ENCODE measurements at regions of chr20 and their contacts with region 1.

Region 1: DNA sequence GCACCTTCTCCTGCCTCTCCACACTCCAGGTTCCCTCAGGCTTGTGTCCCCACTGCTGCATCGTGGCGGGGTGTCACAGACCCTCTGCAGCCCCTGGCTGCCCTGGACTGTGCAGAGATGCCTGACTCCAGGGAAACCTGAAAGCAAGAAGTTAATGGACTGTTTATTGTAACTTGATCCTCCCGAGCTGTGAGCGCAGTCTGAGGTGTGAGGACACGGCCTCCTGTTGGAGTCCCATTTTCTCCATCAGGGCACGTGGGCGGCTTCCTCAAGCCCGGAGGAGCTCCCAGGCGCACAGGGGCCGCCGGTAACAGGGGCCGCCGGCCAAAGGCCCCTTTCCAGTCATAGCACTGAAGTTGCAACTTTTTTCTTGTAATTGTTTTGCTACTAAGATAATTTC is 16.9 kb downstream of the RBM38 start:
- DNase-seq: no peak
- ATAC-seq: no peak

Region 2: GRCh38 chr20:57374931-57375651 is 33.0 kb before region 1 on chr20:
- intact Hi-C with region 1: no loop called
- DNase-seq: no peak
- ATAC-seq: peak; percentile 79

Region 3: DNA sequence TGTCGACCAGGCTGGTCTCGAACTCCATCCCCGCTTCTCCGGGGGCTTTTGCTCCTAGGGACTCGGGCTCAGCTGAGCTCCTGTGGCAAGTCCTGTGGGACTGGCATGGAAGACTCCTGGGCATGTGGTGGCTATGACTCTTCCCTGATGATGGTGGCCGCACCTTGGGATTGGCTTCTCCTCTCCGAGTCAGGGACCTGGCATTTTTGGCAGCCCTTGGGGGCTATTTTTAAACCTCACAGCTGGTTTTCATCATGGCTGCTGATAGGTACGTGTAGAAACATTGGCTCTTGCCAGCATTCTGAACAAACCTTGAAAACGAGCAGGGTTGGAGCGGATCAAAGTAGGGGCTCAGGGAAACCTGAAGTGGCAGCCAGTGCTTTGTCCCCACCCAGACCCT is 37.2 kb after region 1 on chr20:
- intact Hi-C with region 1: loop called (anchors 1 kb)
- DNase-seq: no peak
- ATAC-seq: no peak

Region 4: DNA sequence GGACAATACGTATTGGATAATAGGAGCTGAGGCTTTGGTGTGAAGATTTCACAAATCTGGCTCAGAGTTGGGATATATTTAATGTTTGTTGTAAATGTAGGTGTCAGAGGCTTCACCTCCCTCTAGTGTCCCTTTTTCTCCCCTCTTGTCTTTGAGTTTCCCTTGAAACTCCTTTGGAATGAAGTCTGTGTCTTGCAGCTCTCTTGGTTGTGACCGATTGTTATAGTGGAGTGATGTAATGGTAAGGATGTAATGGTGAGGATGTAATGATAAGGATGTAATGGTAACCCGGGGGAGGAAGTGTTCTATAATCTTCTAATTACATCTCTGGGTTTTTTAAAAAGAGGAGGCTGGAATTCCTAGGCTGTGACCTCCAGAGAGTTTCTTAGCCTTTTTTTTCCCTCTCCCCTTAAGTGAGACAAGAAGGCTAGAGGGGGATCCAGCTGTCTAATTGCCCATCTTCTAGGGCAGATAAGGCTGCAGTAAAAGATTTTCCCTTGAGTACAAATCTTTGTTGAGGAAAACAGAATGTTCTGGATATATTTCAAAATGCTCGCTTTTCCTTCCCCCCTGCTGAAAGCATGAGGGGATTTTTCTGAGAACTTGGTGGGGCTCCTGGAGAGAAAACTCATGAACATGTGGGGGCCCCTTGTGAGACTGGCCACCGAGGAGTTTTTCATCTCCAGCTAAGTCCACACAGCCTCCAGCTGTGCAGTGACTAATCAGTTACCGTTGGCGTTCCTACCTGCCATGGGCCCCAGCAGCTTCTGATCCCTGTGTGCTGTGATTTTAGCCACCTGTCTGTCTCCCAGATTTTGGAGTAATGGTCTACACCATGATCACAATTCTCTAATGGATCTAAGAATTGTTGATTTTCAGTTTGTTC is 458.3 kb after region 1 on chr20:
- intact Hi-C with region 1: no loop called
- DNase-seq: no peak
- ATAC-seq: no peak